CD14-positive monocyte (primary cell): ENCODE measurements at regions of chr22 and their contacts with region 1.

Region 1: GRCh38 chr22:45096256-45096907 is 67.3 kb upstream of the NUP50 start:
- DNase-seq: peak; percentile 49 to 64 (median 60)
- H3K4me3 ChIP-seq: no peak overlapping the region
- H3K4me3 Mint-ChIP-seq: no peak overlapping the region
- H3K27ac ChIP-seq: no peak overlapping the region
- H3K27ac Mint-ChIP-seq: no peak overlapping the region
- H3K4me1 ChIP-seq: peaks cover 4 to 9% of the 10 kb centered on the region in 2 donors
- H3K4me1 Mint-ChIP-seq: peaks cover 14% of the 10 kb centered on the region
- H3K27me3 ChIP-seq: peaks cover 0 to 7% of the 10 kb centered on the region in 2 donors
- H3K27me3 Mint-ChIP-seq: peaks cover 14 to 32% (median 15%) of the 10 kb centered on the region in 3 donors
- CTCF ChIP-seq: peak; percentile 86

Region 2: DNA sequence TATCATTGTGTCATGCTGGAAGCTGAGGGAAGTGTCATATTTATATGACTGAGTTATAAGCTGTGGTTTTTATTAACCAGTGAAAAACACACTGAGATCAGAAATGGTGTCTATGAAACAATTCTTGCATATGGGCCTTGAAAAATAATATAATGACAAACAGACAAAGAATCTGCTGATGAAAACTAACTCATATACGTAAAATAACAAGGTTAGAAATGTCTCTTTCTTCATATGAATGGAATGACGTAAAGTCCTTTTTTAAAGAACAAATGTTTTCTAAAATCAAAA is 37.8 kb before region 1 on chr22:
- intact Hi-C with region 1: no loop called
- DNase-seq: no peak
- H3K4me3 ChIP-seq: no peak overlapping the region
- H3K4me3 Mint-ChIP-seq: no peak overlapping the region
- H3K27ac ChIP-seq: no peak overlapping the region
- H3K27ac Mint-ChIP-seq: no peak overlapping the region
- H3K4me1 ChIP-seq: no peaks in the 10 kb centered on the region
- H3K4me1 Mint-ChIP-seq: no peaks in the 10 kb centered on the region
- H3K27me3 ChIP-seq: no peaks in the 10 kb centered on the region
- H3K27me3 Mint-ChIP-seq: peaks cover 5 to 13% (median 6%) of the 10 kb centered on the region in 3 donors
- CTCF ChIP-seq: no peak

Region 3: DNA sequence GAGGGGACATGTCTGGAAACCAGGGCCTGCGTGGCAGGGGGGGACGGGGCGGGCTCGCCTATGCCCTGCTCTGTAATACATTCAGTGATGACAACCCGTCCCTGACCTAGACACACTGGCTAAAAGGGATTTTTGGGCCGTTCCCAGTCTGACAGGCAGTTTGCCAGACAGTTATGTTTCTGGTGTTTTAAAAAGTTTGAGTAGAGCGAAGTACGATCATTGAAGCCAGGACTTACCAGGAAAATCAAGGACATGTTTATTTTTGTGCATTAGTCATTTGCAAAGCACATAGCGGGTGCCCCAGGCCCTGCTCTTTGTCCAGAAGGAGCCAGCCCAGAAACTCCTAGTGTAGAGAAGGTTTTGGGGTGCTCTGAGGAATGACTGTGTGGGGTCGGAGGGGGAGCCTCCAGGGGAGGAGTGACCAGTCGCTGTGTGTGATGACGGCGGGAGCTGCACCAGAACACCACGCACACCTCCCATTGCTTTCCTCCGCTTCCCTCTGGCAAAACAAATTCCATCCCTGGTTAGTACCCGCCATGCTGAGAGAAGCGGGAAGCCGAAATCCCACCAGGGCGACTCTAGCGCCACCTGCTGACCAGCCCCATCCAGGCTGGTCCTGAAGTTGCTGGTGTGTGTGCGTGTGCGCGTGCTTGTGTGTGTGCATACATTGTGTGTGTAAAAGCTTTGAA is 457.1 kb after region 1 on chr22:
- intact Hi-C with region 1: loop called in 1 of 2 experiments (anchors 10 kb)
- DNase-seq: peak; percentile 29 to 38 (median 31)
- H3K4me3 ChIP-seq: no peak overlapping the region
- H3K4me3 Mint-ChIP-seq: peak overlapping the region in 1 of 2 donors; percentile 60
- H3K27ac ChIP-seq: no peak overlapping the region
- H3K27ac Mint-ChIP-seq: no peak overlapping the region
- H3K4me1 ChIP-seq: peaks cover 6 to 11% of the 10 kb centered on the region in 2 donors
- H3K4me1 Mint-ChIP-seq: peaks cover 7% of the 10 kb centered on the region
- H3K27me3 ChIP-seq: peaks cover 0 to 4% of the 10 kb centered on the region in 2 donors
- H3K27me3 Mint-ChIP-seq: peaks cover 12 to 14% (median 13%) of the 10 kb centered on the region in 3 donors
- CTCF ChIP-seq: peak; percentile 81